SK-N-SH (cell line): ENCODE measurements at regions of chr14 and their contacts with region 1.

Region 1: DNA sequence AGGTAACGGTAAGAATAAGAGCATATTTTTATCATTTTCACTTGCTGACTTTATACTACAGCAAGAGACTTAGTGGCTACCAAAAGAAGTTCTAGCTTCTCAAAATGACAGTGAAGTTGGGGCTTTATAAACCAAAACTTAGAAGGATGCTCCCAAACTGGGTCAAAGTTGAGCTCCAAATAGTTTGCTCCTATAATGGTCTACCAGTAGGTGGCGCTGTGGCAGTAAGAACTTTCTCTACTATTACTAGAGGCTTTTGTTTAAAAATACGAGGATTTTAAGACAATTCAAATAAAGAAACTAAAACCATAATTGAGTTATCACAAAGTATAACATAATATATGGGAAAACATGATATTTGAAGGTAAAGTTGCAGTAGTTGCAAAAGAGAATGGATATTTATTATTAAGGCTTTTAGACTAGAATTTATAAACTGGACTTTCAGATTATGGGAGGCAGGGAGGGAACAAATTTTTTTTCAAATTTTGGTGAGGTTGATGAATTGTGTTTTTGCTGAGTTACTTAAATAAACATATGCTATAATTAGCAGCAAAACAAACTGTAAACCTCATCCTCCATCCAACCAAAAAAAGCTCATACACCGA is 75.0 kb downstream of the TGFB3 start:
- DNase-seq: peak; percentile 39
- H3K4me3 ChIP-seq: no peak overlapping the region
- H3K27ac ChIP-seq: no peak overlapping the region
- H3K4me1 ChIP-seq: peaks cover 9 to 13% of the 10 kb centered on the region in 2 experiments; a peak in 3 of 4 replicates
- H3K27me3 ChIP-seq: no peaks in the 10 kb centered on the region
- CTCF ChIP-seq: peak; percentile 98
- EP300 ChIP-seq: no peak
- RAD21 ChIP-seq: peak; percentile 87

Region 2: DNA sequence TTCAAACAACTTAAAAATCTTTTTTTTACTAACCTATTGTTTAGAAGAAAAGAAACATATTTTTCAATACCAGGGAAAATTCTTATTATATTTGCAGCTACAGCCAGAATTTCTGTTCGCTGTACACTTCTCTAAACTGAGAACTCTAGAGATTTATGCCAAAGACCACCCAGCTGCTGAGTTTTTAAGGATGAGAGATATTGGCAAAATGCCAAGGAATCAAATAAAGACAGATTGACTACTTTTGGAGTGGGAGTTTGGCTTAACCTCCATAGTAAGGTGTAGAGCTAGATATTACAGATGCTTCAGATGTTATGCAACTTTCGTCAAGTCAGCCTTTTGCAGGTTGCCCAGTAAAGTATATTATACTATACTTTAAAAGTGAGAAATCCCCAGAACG is 173.9 kb before region 1 on chr14:
- CTCF ChIA-PET with region 1: no interaction called
- POLR2A ChIA-PET with region 1: no interaction called
- DNase-seq: no peak
- H3K4me3 ChIP-seq: no peak overlapping the region
- H3K27ac ChIP-seq: no peak overlapping the region
- H3K4me1 ChIP-seq: no peaks in the 10 kb centered on the region
- H3K27me3 ChIP-seq: no peaks in the 10 kb centered on the region
- CTCF ChIP-seq: no peak
- EP300 ChIP-seq: no peak
- RAD21 ChIP-seq: no peak

Region 3: GRCh38 chr14:75794615-75795038 is 112.2 kb before region 1 on chr14:
- CTCF ChIA-PET with region 1: interaction called, 15 read pairs
- POLR2A ChIA-PET with region 1: no interaction called
- DNase-seq: peak; percentile 7
- H3K4me3 ChIP-seq: no peak overlapping the region; a peak in 1 of 4 replicates
- H3K27ac ChIP-seq: peak overlapping the region in 1 of 2 experiments; percentile 30; a peak in 2 of 4 replicates
- H3K4me1 ChIP-seq: no peaks in the 10 kb centered on the region; a peak in 1 of 4 replicates
- H3K27me3 ChIP-seq: no peaks in the 10 kb centered on the region
- CTCF ChIP-seq: peak; percentile 64
- EP300 ChIP-seq: no peak
- RAD21 ChIP-seq: peak; percentile 70

Region 4: GRCh38 chr14:75879031-75879430 is 27.7 kb before region 1 on chr14:
- CTCF ChIA-PET with region 1: interaction called, 83 read pairs
- POLR2A ChIA-PET with region 1: no interaction called
- DNase-seq: no peak
- H3K4me3 ChIP-seq: no peak overlapping the region
- H3K27ac ChIP-seq: peak overlapping the region; percentile 80 to 97
- H3K4me1 ChIP-seq: peaks cover 9 to 67% of the 10 kb centered on the region in 2 experiments
- H3K27me3 ChIP-seq: no peaks in the 10 kb centered on the region
- CTCF ChIP-seq: no peak
- EP300 ChIP-seq: peak; percentile 16 to 72; a peak in 2 of 4 replicates
- RAD21 ChIP-seq: no peak

Region 5: GRCh38 chr14:75896341-75896740 is 10.4 kb before region 1 on chr14:
- CTCF ChIA-PET with region 1: interaction called, 83 read pairs
- POLR2A ChIA-PET with region 1: no interaction called
- DNase-seq: no peak
- H3K4me3 ChIP-seq: no peak overlapping the region
- H3K27ac ChIP-seq: no peak overlapping the region; a peak in 1 of 4 replicates
- H3K4me1 ChIP-seq: no peaks in the 10 kb centered on the region
- H3K27me3 ChIP-seq: no peaks in the 10 kb centered on the region
- CTCF ChIP-seq: no peak
- EP300 ChIP-seq: no peak
- RAD21 ChIP-seq: no peak

Region 6: DNA sequence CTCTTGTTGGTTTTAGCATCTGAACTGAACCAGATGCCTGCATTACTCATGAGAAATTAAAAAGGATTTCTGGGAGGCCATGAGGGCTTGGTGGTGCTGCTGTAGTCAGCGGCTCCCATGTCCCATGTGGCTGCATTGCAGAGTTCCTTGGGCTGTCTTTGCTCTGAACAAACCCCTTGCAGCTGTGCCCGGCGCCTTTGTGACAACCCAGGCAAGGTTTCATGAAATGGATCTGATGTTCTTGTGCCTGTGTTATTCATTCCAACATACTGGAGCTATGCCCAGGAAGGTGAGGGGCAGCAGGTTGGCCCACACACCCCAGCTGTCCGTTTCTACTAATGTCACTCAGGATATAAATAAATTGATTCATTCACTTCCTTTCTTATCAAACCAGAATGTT is 34.3 kb after region 1 on chr14:
- CTCF ChIA-PET with region 1: interaction called, 17 read pairs
- POLR2A ChIA-PET with region 1: no interaction called
- DNase-seq: no peak
- H3K4me3 ChIP-seq: no peak overlapping the region
- H3K27ac ChIP-seq: no peak overlapping the region
- H3K4me1 ChIP-seq: peaks cover 3 to 4% of the 10 kb centered on the region in 2 experiments; a peak in 1 of 4 replicates
- H3K27me3 ChIP-seq: no peaks in the 10 kb centered on the region
- CTCF ChIP-seq: no peak
- EP300 ChIP-seq: no peak
- RAD21 ChIP-seq: no peak

Region 7: DNA sequence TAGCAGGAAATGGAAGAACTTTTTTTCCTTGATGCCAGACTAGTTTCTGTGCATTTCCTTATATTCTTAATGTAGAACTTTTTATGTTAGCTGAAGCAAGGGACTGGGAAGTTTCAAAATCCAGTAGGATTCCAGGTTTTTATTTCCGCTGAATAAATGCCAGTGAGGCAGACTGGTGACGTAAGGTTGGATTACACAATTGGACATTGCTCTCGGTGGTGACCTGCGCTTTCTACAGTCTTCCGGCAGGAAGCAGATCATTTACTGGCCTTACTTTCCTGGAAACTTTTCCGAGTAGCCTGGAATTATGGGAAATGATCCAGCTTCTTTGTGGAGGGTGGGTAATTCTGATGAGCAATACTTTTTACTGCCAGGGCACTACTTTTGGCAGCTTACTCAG is 82.4 kb after region 1 on chr14:
- CTCF ChIA-PET with region 1: interaction called, 550 read pairs
- POLR2A ChIA-PET with region 1: no interaction called
- DNase-seq: no peak
- H3K4me3 ChIP-seq: no peak overlapping the region
- H3K27ac ChIP-seq: no peak overlapping the region
- H3K4me1 ChIP-seq: peaks cover 4 to 23% of the 10 kb centered on the region in 2 experiments; a peak in 3 of 4 replicates
- H3K27me3 ChIP-seq: no peaks in the 10 kb centered on the region
- CTCF ChIP-seq: no peak
- EP300 ChIP-seq: no peak
- RAD21 ChIP-seq: no peak

Region 8: DNA sequence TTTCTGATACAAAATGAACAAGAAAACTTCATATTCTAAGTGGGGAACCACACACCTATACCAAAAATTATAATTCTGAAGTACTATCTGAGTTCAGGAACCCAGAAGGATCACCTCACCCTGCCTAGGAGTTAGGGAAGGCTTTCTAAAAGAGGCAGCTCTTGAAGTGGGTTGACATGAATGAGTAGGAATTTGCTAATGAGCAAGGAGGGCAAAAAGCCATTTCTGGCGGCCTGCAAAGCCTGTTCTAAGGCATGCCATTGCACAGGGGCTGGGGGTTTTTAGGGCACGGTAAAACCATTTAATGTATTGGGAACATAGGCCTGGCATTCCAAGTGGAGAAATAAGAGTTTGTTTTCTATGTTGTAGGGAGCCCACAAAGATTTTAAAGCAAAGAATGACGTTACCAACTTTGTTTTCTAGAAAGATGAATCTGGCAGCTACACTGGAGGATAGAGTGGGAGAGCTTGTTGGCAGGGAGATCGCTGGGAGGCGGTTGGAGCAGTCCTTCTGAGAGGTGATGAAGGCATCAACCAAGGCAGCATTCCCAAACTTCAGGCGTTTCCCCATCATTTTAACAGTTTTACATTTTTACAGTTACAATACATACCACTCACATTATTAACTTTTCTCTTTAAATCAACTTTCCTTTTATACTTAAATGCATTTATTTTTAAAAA is 92.9 kb after region 1 on chr14:
- CTCF ChIA-PET with region 1: no interaction called
- POLR2A ChIA-PET with region 1: no interaction called
- DNase-seq: no peak
- H3K4me3 ChIP-seq: no peak overlapping the region
- H3K27ac ChIP-seq: no peak overlapping the region
- H3K4me1 ChIP-seq: no peaks in the 10 kb centered on the region
- H3K27me3 ChIP-seq: no peaks in the 10 kb centered on the region
- CTCF ChIP-seq: no peak
- EP300 ChIP-seq: no peak
- RAD21 ChIP-seq: no peak

Region 9: DNA sequence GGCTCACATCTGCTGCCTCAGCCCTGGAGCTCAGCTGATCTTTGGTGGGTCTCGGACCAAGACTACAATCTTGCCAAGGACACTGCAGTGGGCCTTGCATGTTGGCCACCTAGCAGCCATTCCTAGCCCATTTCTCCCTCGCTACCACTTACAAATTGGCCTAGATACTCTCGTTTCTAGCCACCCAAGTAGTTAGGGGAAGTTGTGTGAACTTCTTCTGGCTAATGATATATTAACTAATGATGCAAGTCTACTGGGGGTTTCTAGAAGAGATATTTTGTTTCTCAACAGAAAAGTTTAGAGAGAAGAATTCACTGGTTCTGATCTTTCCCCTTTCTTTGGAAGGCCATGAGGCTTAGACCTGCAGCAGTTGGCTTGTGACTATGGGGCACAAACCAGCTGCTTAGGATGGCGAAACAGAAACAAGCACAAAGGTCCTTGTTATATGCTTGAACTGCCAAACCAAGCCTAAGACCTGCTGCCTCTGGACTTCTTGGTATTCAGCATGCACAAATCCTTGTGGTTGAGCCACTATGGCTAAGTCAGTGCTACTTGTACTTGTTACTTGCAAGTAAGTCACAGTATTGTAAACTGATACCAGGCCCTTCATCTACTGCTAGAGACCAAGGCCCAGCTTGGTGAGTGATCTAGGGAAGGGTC is 214.4 kb after region 1 on chr14:
- CTCF ChIA-PET with region 1: no interaction called
- POLR2A ChIA-PET with region 1: no interaction called
- DNase-seq: no peak
- H3K4me3 ChIP-seq: no peak overlapping the region
- H3K27ac ChIP-seq: no peak overlapping the region
- H3K4me1 ChIP-seq: peaks cover 0 to 13% of the 10 kb centered on the region in 2 experiments; a peak in 2 of 4 replicates
- H3K27me3 ChIP-seq: no peaks in the 10 kb centered on the region
- CTCF ChIP-seq: no peak
- EP300 ChIP-seq: no peak
- RAD21 ChIP-seq: no peak